Ovary (tissue), 10 donors: ENCODE measurements at regions of chr4 and their contacts with region 1.

Region 1: DNA sequence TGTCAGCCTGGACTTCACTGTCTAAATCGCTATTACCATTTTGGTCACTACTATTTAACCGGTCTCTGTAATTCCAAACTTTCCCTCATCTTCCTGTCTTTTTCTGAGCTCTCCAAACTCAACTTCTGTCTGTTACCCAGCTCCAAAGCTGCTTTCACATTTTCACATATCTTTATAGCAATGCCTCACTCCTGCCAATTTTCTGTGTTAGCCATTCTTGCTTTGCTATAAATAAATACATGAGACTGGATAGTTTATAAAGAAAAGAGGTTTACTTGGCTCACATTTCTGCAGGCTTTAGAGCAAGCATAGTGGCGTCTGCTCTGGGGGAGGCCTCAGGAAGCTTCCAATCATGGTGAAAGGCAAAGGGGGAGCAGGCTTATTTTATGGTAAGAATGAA is 368.3 kb upstream of the GNPDA2 start:
- DNase-seq: no peak
- H3K4me3 ChIP-seq: no peak overlapping the region
- H3K27ac ChIP-seq: no peak overlapping the region
- H3K4me1 ChIP-seq: no peaks in the 10 kb centered on the region
- H3K27me3 ChIP-seq: no peaks in the 10 kb centered on the region
- CTCF ChIP-seq: no peak
- EP300 ChIP-seq: no peak
- POLR2A ChIP-seq: no peak

Region 2: GRCh38 chr4:45317276-45317675 is 222.6 kb after region 1 on chr4:
- intact Hi-C with region 1: loop called in 1 of 4 experiments (anchors 10 kb)
- DNase-seq: no peak
- H3K4me3 ChIP-seq: no peak overlapping the region
- H3K27ac ChIP-seq: no peak overlapping the region
- H3K4me1 ChIP-seq: no peaks in the 10 kb centered on the region
- H3K27me3 ChIP-seq: no peaks in the 10 kb centered on the region
- CTCF ChIP-seq: no peak
- EP300 ChIP-seq: no peak
- POLR2A ChIP-seq: no peak